Activated CD8-positive, alpha-beta T cell treated with anti-CD3 and anti-CD28 coated beads for 36 hours (primary cell): ENCODE measurements at regions of chr9 and their contacts with region 1.

Region 1: GRCh38 chr9:83334320-83334719 is 203.9 kb downstream of the FRMD3 start:
- DNase-seq: peak; percentile 83
- ATAC-seq: peak; percentile 67
- H3K4me3 Mint-ChIP-seq: no peak overlapping the region
- H3K27ac Mint-ChIP-seq: no peak overlapping the region
- H3K4me1 Mint-ChIP-seq: no peaks in the 10 kb centered on the region
- H3K27me3 Mint-ChIP-seq: no peaks in the 10 kb centered on the region
- CTCF ChIP-seq: peak; percentile 88

Region 2: DNA sequence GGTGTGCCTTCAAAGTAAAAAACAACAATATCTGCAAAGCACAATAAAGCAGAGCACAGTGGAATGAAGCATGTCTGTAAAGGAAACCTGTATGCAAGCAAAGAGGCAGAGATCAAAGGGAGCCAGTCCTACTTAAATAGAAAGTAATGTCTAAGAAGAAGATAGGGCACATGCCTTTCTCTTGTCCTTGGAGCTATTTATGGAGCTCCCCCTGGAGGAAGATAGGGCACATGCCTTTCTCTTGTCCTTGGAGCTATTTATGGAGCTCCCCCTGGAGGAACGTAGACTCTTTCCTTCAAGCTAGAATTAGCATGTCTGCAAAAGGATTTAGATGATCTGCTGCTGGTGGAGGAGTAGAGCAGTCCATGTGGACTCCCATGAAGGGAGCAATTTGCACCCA is 103.3 kb before region 1 on chr9:
- CTCF ChIA-PET with region 1: no interaction called
- POLR2A ChIA-PET with region 1: no interaction called
- intact Hi-C with region 1: no loop called
- DNase-seq: peak; percentile 18
- ATAC-seq: no peak
- H3K4me3 Mint-ChIP-seq: no peak overlapping the region
- H3K27ac Mint-ChIP-seq: no peak overlapping the region
- H3K4me1 Mint-ChIP-seq: no peaks in the 10 kb centered on the region
- H3K27me3 Mint-ChIP-seq: peaks cover 3% of the 10 kb centered on the region
- CTCF ChIP-seq: peak; percentile 23

Region 3: DNA sequence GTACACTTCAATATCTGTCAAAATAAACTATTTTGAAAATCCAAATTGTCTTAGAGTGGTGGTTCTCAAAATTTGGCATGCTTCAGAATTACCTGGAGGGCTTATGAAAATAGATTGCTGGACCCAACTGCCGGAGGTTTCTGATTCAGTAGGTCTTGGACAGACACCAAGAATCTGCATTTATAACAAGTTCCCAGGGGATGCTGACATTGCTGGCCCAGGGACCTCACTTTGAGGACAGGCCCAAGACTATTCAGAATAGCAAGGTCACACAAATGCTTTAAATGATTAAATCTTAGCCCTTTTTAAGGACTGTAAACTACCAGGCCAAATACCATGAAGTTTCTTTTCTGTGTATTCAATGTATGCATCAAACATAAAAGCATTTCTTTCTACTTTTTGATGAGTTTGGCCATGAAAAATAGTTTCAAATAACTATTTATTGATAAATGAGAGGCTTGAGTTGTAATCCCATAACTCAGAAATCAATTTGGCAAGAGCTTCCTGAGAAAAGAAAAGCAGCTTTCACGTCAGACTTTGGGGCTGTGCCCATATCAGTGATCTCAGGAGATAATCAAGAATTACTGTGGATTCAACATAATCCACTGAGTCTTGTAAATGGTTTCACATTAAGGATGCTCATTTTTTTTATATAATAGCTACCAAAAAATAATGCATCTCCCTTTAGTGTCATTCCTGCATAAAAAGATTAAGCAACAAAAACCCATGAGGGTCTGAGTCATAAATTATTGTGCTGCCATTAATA is 12.5 kb after region 1 on chr9:
- CTCF ChIA-PET with region 1: interaction called, 17 read pairs
- POLR2A ChIA-PET with region 1: interaction called, 4 read pairs
- intact Hi-C with region 1: no loop called
- DNase-seq: no peak
- ATAC-seq: no peak
- H3K4me3 Mint-ChIP-seq: no peak overlapping the region
- H3K27ac Mint-ChIP-seq: no peak overlapping the region
- H3K4me1 Mint-ChIP-seq: no peaks in the 10 kb centered on the region
- H3K27me3 Mint-ChIP-seq: no peaks in the 10 kb centered on the region
- CTCF ChIP-seq: no peak

Region 4: DNA sequence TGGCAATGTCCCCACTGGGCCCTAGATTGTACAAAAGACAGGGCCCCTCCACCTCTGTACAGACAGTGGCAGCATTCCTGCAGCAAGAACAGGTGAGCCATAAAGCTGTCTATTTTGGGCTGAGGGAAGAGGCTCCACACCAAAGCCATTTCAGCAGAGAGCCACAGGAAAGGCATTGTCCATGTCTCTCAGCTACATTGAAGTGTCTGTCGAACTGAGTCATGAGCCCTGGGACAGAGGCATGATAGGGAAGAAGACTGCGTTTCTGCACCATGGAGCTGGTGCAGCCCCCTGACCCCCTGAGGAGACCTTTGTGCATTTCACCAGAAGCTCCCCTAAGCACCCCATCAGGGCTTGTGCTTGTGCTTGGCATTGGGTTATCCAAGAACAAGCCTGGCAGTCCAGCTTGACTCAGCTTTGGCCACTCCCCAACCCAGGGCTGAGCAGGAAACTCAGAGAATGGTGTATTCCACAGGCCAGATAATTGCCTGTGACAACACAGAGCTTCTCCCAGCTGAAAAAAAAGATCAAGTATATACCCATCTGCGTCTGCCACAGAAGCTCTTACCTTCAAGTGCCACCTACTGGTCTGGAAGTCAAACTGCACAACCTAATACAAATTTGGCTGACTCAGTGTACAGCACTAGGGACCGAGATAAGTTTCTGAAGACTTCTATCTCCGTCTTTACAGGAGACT is 209.8 kb after region 1 on chr9:
- CTCF ChIA-PET with region 1: interaction called, 64 read pairs
- POLR2A ChIA-PET with region 1: no interaction called
- intact Hi-C with region 1: loop called (anchors 2 kb)
- DNase-seq: peak; percentile 3
- ATAC-seq: peak; percentile 71
- H3K4me3 Mint-ChIP-seq: no peak overlapping the region
- H3K27ac Mint-ChIP-seq: no peak overlapping the region
- H3K4me1 Mint-ChIP-seq: no peaks in the 10 kb centered on the region
- H3K27me3 Mint-ChIP-seq: peaks cover 12% of the 10 kb centered on the region
- CTCF ChIP-seq: peak; percentile 61

Region 5: DNA sequence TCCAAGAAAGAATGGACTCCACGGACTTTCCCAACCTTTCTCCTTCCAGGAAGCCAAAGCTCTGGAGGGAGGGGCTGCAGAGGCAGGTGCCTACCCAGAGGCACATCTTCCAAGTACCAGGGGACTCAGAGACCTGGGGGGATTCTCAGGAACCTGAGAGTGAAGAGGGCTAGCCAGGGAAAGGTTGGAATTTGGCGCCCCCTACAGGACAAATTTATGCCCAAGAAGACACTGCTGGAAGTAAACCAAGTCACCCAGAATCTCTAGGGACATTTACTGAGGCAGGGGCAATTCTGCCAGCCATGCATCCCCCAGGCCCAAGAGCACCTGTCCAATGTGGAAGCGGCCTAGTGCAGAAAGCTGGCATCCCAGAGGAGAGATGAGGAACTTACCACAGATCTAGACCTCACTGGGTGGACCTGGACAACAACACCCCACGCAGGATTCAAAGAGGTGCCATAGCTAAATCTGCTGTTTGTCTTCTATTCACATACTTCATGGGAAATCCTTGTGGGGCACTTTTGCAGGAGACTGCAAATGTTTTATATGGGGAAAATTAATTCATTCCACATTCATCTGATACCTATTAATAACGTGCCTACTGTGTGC is 262.7 kb after region 1 on chr9:
- CTCF ChIA-PET with region 1: interaction called, 42 read pairs
- POLR2A ChIA-PET with region 1: interaction called, 3 read pairs
- intact Hi-C with region 1: loop called (anchors 5 kb)
- DNase-seq: peak; percentile 74
- ATAC-seq: peak; percentile 64
- H3K4me3 Mint-ChIP-seq: no peak overlapping the region
- H3K27ac Mint-ChIP-seq: no peak overlapping the region
- H3K4me1 Mint-ChIP-seq: no peaks in the 10 kb centered on the region
- H3K27me3 Mint-ChIP-seq: no peaks in the 10 kb centered on the region
- CTCF ChIP-seq: peak; percentile 79

Region 6: DNA sequence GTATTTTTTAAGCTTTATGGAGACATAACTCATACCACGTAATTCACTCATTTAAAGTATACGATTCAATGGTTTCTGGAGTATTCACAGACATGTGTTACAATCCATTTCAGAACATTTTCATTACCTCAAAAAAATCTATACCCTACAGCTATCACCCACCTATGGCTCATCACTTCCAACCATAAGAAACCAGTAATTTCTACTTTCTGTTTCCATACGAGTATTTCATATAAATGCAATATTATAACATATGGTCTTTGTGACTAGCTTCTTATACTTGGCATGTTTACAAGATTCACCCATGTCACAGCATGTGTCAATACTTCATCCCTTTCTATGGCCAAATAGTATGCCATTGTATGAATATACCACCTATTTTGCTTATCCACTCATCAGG is 354.6 kb after region 1 on chr9:
- CTCF ChIA-PET with region 1: no interaction called
- POLR2A ChIA-PET with region 1: no interaction called
- intact Hi-C with region 1: no loop called
- DNase-seq: no peak
- ATAC-seq: peak; percentile 91
- H3K4me3 Mint-ChIP-seq: no peak overlapping the region
- H3K27ac Mint-ChIP-seq: peak overlapping the region; percentile 60
- H3K4me1 Mint-ChIP-seq: peaks cover 69% of the 10 kb centered on the region
- H3K27me3 Mint-ChIP-seq: no peaks in the 10 kb centered on the region
- CTCF ChIP-seq: no peak